ENCODE measurements at regions of chr7 and their contacts with region 1.

Region 1: DNA sequence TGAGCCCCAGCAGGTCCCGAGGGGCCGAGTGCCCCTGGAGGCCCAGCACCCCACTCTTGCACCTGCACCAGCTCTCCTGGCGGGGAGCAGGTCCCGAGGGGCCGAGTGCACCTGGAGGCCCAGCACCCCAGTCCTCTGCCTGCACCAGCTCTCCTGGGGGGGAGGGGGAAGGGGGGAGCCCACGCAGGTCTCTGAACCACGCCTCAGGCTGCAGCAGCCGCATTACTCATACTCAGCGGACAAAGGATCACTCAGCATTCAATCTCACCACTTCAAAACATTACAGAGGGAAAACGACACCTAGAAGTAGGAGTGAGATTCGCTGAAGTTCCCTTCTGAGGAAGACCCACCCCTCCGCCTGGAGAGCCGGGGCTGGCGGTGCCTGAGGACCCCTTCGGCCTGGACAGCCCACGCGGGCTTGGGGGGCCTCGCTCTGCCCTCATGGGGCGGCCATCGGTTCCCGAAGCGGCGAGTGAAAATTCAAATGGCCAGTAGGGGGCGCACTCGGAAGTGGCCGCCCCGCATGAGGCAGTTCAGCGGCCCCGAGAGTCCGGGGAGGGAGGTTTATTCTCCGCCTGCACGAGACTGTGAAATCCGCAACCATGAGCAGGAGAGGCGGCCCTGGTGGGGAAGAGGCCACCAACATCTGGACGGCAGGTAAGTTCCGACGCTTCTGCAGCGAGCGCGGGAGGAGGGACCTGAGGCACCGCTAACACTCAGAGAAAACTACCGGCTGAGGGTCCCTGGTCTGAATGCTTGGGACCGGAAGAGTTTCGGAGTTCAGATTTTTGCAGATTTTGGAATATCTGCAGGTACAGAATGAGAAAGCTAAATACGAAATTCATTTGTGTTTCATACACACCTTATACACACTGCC is 1.1 kb upstream of the GPER1 start:
- DNase-seq: peak; percentile 81 to 84 (median 82)
- ATAC-seq: peak; percentile 67 to 75 (median 72)
- H3K4me3 ChIP-seq: peak overlapping the region; percentile 30 to 57 (median 54)
- H3K27ac ChIP-seq: no peak overlapping the region
- H3K4me1 ChIP-seq: peaks cover 0 to 20% (median 9%) of the 10 kb centered on the region in 4 donors
- H3K27me3 ChIP-seq: no peaks in the 10 kb centered on the region
- CTCF ChIP-seq: peak; percentile 89 to 99 (median 98)
- POLR2A ChIP-seq: no peak

Region 2: DNA sequence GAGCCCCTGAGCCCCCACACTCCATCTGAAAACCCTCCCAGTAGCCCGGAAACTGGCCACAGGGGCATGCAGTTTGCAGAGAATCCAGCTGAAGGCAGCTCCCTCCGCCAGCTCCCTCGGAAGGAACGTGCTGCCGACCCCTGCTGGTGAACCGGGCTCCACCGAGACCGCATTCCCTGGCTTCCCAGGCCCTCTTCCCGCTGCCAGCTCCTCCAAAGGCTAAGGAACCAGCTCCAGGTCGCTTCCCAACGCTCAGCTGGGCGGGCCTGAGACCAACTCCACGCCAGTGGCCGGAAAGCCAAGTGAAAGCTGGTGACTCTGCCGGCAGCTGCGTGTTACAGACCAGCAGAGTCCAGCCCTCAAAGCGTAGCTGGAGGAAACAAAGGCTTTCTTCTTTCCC is 36.9 kb after region 1 on chr7:
- intact Hi-C with region 1: loop called (anchors 5 kb)
- DNase-seq: peak; percentile 78 to 82 (median 80)
- ATAC-seq: peak; percentile 90 to 97 (median 96)
- H3K4me3 ChIP-seq: no peak overlapping the region
- H3K27ac ChIP-seq: peak overlapping the region in 2 of 3 donors; percentile 3 to 51
- H3K4me1 ChIP-seq: peaks cover 0 to 6% (median 0%) of the 10 kb centered on the region in 4 donors
- H3K27me3 ChIP-seq: no peaks in the 10 kb centered on the region
- CTCF ChIP-seq: peak; percentile 60 to 74 (median 71)
- POLR2A ChIP-seq: no peak

Region 3: GRCh38 chr7:1210321-1210978 is 123.6 kb after region 1 on chr7:
- intact Hi-C with region 1: no loop called
- DNase-seq: no peak
- ATAC-seq: no peak
- H3K4me3 ChIP-seq: no peak overlapping the region
- H3K27ac ChIP-seq: no peak overlapping the region
- H3K4me1 ChIP-seq: no peaks in the 10 kb centered on the region
- H3K27me3 ChIP-seq: no peaks in the 10 kb centered on the region
- CTCF ChIP-seq: no peak
- POLR2A ChIP-seq: no peak

Measured in right lobe of liver (tissue), 6 donors.